Cardiac septum (tissue), 1 donor: ENCODE measurements at regions of chr6 and their contacts with region 1.

Region 1: GRCh38 chr6:31197559-31198305 is 27.2 kb upstream of the POU5F1 start:
- DNase-seq: peak; percentile 96

Region 2: GRCh38 chr6:31139599-31139998 is 58.1 kb before region 1 on chr6:
- intact Hi-C with region 1: loop called (anchors 1 kb)
- DNase-seq: no peak

Region 3: GRCh38 chr6:31271641-31272357 is 74.1 kb after region 1 on chr6 and contains the start of gene HLA-C:
- intact Hi-C with region 1: loop called (anchors 2 kb)
- DNase-seq: peak; percentile 95
- total RNA-seq, gene HLA-C: 237 TPM

Region 4: GRCh38 chr6:31366693-31367470 is 169.2 kb after region 1 on chr6:
- intact Hi-C with region 1: loop called (anchors 1 kb)
- DNase-seq: peak; percentile 94